GM10248 (cell line): ENCODE measurements at regions of chr4 and their contacts with region 1.

Region 1: GRCh38 chr4:146283758-146284651 is 69.7 kb downstream of the REELD1 start:
- DNase-seq: no peak
- CTCF ChIP-seq: no peak

Region 2: GRCh38 chr4:146273204-146273901 is 10.7 kb before region 1 on chr4:
- CTCF ChIA-PET with region 1: interaction called, 10 read pairs
- POLR2A ChIA-PET with region 1: no interaction called
- DNase-seq: peak; percentile 38
- CTCF ChIP-seq: no peak

Region 3: DNA sequence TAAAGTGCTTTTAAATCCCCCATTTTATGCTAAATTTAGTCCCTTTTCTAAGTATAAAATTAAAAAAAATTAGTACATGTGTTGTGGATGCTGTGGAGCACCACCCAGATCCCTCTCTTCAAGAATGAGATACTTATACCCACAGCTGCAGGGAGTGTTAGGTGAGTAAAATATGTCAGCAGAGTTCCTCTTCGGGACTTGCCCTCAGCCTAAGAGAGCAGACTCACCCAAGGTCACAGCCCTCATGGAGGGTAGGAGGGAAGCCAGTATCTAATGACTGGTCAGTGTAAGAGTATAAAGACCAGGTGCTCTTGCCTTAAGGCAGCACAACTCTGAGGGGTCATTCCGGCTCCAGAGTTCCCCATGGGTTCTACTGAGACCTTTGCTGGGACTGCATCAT is 18.8 kb after region 1 on chr4:
- CTCF ChIA-PET with region 1: no interaction called
- POLR2A ChIA-PET with region 1: no interaction called
- DNase-seq: no peak
- CTCF ChIP-seq: no peak

Region 4: DNA sequence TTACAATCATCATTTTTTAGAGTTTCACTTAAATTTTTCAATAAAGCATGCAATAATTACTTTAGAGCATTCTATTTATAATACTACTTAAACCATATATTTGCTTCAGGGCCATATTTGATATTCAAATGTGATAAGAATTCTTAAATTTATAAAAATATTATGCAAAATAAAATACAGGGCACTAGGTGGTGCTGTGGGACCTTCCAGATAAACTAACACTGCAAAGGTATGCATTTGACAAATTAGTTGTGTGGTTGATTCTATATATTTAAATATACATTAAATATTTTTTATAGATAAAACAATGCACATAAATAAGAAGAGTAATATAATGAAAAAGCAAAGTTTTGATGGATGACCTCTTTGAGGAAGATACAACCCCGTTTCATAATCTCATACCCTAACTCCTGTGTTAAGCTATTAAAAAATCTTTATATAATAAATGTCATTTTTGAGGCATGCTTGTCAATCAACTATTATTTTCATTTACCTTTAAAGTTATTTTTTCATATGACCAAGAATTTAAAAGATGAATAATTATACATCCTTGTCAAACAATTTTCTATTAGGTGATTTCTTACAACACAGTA is 58.7 kb after region 1 on chr4:
- CTCF ChIA-PET with region 1: no interaction called
- POLR2A ChIA-PET with region 1: no interaction called
- DNase-seq: no peak
- CTCF ChIP-seq: peak; percentile 36